Caco-2 (cell line): ENCODE measurements at regions of chr2 and their contacts with region 1.

Region 1: GRCh38 chr2:39436592-39437510 is at the start of gene MAP4K3:
- DNase-seq: peak; percentile 98 to 99
- H3K4me3 ChIP-seq: peak within 1 kb of the TSS; percentile 86
- H3K4me3 Mint-ChIP-seq: peak within 1 kb of the TSS; percentile 77
- H3K27ac Mint-ChIP-seq: peak within 1 kb of the TSS; percentile 81
- H3K4me1 ChIP-seq: peaks cover 36% of the 10 kb centered on the region
- H3K4me1 Mint-ChIP-seq: peaks cover 38% of the 10 kb centered on the region
- H3K27me3 ChIP-seq: no peaks in the 10 kb centered on the region
- H3K27me3 Mint-ChIP-seq: no peaks in the 10 kb centered on the region
- CTCF ChIP-seq: no peak
- total RNA-seq, gene MAP4K3: 46.1 and 50.7 TPM in 2 replicates

Region 2: DNA sequence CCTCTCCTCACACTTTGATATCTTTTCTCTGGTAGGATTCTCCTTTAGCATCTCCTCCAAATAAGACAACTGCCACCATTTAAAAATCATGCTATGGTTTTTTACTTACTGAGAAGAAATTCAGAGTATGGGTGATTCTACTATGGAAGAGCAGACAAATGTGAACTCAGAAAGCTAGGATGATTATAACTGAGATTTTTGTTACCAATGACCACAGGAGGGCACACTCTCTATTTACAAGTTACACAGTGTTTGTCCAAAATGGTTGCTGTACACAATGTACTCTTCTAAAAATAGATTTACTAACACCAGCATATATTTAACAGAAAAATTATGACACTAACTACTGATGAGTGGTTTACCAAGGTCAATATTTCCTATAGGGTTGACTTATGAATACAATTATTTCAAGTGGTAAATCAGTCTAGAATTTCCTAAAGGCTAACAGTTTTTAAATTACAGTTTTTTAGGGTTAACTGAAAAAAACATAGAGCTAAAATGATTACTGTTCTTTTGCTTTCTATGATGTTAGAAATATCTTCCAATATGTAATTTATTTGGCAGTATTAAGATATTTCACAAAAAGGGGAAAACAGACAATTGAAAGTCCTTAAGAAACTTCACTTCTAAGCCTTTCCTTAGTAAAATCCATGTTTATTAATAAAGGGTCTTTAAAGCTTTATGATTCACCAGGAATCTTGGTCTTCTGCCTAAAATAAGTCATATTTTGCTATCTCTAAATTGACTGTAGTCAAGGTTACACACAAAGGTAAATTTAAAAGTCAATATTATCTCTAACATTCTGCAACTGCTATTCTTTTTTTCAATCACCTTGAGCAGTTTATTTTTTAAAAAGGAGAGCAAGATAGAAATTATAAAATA is 57.0 kb before region 1 on chr2:
- CTCF ChIA-PET with region 1: interaction called, 3 read pairs
- POLR2A ChIA-PET with region 1: no interaction called
- intact Hi-C with region 1: loop called (anchors 1 kb)
- DNase-seq: peak in 1 of 2 experiments; percentile 43
- H3K4me3 ChIP-seq: no peak overlapping the region
- H3K4me3 Mint-ChIP-seq: no peak overlapping the region
- H3K27ac Mint-ChIP-seq: no peak overlapping the region
- H3K4me1 ChIP-seq: 0 out of 2 replicates have a peak, but pooled peaks cover 4% of the 10 kb centered on the region
- H3K4me1 Mint-ChIP-seq: peaks cover 7% of the 10 kb centered on the region
- H3K27me3 ChIP-seq: no peaks in the 10 kb centered on the region
- H3K27me3 Mint-ChIP-seq: no peaks in the 10 kb centered on the region
- CTCF ChIP-seq: peak; percentile 57 to 74

Region 3: DNA sequence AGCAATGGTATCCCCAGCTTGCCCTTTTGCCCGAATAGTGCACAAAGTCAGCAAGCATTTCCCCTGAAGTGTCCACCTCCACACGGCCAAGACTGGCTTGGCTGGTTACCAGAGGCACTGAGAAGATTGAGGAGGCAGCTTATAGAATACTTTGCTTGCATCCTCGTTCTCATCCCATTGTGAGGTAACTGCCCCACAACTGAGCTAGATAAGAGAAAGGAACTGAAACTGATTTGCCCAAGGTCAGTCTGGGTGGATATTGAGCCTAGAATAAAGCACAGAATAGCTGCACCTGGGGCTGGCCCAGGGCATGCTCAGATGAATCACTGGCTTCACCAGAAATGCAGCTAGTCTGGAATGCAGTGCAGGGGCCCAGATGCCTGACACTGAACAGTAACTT is 33.0 kb after region 1 on chr2:
- CTCF ChIA-PET with region 1: no interaction called
- POLR2A ChIA-PET with region 1: interaction called, 4 read pairs
- intact Hi-C with region 1: loop called (anchors 2 kb)
- DNase-seq: peak; percentile 60
- H3K4me3 ChIP-seq: no peak overlapping the region
- H3K4me3 Mint-ChIP-seq: peak overlapping the region; percentile 30
- H3K27ac Mint-ChIP-seq: peak overlapping the region; percentile 85
- H3K4me1 ChIP-seq: peaks cover 34% of the 10 kb centered on the region
- H3K4me1 Mint-ChIP-seq: peaks cover 41% of the 10 kb centered on the region
- H3K27me3 ChIP-seq: no peaks in the 10 kb centered on the region
- H3K27me3 Mint-ChIP-seq: no peaks in the 10 kb centered on the region
- CTCF ChIP-seq: no peak

Region 4: GRCh38 chr2:39504790-39505335 is 68.0 kb after region 1 on chr2:
- CTCF ChIA-PET with region 1: no interaction called
- POLR2A ChIA-PET with region 1: no interaction called
- intact Hi-C with region 1: loop called (anchors 2 kb)
- DNase-seq: no peak
- H3K4me3 ChIP-seq: no peak overlapping the region
- H3K4me3 Mint-ChIP-seq: no peak overlapping the region
- H3K27ac Mint-ChIP-seq: peak overlapping the region; percentile 15
- H3K4me1 ChIP-seq: peaks cover 38% of the 10 kb centered on the region
- H3K4me1 Mint-ChIP-seq: peaks cover 28% of the 10 kb centered on the region
- H3K27me3 ChIP-seq: no peaks in the 10 kb centered on the region
- H3K27me3 Mint-ChIP-seq: no peaks in the 10 kb centered on the region
- CTCF ChIP-seq: no peak

Region 5: DNA sequence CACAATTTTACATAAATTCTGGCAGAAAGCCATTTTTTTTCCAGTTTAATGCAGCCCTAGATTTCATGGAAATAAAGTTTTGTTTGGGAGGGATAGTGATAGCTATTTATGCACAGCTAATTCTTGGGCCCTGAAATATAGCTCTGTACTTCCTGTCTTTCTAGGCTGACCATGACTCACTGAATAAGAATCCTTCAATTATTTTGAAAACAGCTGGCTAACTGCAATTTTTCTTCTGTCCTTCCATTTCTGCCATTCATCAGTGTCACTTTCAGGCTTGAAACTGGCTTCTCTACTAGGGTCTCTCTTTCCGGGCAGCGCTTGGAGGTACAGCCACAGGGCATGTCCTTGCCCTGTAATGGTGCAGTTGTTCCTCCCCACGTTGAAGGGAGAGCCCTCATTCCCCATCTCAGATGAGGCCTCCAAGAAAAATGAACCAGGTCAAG is 131.7 kb after region 1 on chr2:
- CTCF ChIA-PET with region 1: no interaction called
- POLR2A ChIA-PET with region 1: no interaction called
- intact Hi-C with region 1: loop called (anchors 1 kb)
- DNase-seq: no peak
- H3K4me3 ChIP-seq: no peak overlapping the region
- H3K4me3 Mint-ChIP-seq: peak overlapping the region; percentile 26
- H3K27ac Mint-ChIP-seq: peak overlapping the region; percentile 73
- H3K4me1 ChIP-seq: peaks cover 18% of the 10 kb centered on the region
- H3K4me1 Mint-ChIP-seq: peaks cover 27% of the 10 kb centered on the region
- H3K27me3 ChIP-seq: no peaks in the 10 kb centered on the region
- H3K27me3 Mint-ChIP-seq: no peaks in the 10 kb centered on the region
- CTCF ChIP-seq: no peak